HEK293 (cell line): ENCODE measurements at regions of chr17 and their contacts with region 1.

Region 1: DNA sequence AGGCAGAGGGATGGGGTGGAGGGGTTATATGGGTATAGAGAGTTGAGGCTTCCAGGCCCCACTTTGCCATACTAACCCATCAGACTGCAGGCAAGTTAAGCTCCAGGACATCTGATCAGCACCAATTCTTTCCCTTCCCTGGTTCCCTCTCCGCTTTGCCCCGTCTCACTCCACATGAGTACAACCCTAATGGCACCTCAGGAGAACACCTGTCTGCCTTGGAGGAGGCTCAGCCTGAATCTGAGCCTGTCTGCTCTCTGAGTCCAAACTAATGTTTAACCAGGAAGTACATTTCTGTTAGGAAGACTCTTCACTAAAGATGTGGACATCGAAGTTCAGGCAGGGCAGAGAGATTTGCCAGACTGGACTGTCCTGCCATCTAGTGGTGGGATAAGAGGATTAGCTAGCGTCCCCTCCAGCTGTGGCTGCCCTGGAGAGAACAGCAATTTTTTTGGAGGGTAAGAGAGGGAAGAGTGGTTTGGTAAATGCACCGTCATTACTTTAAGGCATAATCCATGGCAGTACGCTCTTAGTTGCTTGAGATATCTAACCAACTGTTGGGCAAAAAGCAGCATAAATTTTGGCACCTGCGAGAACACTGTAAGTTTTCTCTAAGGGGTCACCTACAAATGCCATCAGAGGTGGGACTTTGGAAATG is 29.2 kb upstream of the LRRC75A start:
- H3K4me3 ChIP-seq: no peak overlapping the region
- H3K27ac ChIP-seq: no peak overlapping the region
- H3K4me1 ChIP-seq: peaks cover 3% of the 10 kb centered on the region; the same call in 1 of the 2 replicates
- CTCF ChIP-seq: peak; percentile 80

Region 2: DNA sequence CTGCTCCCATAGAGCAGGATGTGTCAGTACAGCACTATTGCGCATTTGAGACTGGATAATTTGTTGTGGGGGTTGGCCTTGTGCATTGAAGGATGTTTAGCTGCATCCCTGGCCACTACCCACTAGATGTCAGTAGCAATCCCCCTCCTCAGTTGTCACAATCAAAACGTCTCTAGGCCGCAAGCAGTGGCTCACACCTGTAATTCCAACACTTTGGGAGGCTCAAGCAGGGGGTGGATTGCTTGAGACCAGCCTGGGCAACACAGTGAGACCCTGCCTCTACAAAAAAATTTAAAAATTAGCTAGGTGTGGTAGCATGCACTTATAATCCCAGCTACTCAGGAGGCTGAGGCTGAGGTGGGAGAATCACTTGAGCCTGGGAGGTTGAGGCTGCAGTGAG is 216.4 kb before region 1 on chr17:
- CTCF ChIA-PET with region 1: interaction called, 12 read pairs
- POLR2A ChIA-PET with region 1: no interaction called
- H3K4me3 ChIP-seq: no peak overlapping the region
- H3K27ac ChIP-seq: no peak overlapping the region
- H3K4me1 ChIP-seq: no peaks in the 10 kb centered on the region
- CTCF ChIP-seq: peak; percentile 73

Region 3: GRCh38 chr17:16428098-16428882 is 92.9 kb before region 1 on chr17:
- CTCF ChIA-PET with region 1: interaction called, 10 read pairs
- POLR2A ChIA-PET with region 1: no interaction called
- H3K4me3 ChIP-seq: no peak overlapping the region
- H3K27ac ChIP-seq: no peak overlapping the region
- H3K4me1 ChIP-seq: no peaks in the 10 kb centered on the region
- CTCF ChIP-seq: peak; percentile 84

Region 4: DNA sequence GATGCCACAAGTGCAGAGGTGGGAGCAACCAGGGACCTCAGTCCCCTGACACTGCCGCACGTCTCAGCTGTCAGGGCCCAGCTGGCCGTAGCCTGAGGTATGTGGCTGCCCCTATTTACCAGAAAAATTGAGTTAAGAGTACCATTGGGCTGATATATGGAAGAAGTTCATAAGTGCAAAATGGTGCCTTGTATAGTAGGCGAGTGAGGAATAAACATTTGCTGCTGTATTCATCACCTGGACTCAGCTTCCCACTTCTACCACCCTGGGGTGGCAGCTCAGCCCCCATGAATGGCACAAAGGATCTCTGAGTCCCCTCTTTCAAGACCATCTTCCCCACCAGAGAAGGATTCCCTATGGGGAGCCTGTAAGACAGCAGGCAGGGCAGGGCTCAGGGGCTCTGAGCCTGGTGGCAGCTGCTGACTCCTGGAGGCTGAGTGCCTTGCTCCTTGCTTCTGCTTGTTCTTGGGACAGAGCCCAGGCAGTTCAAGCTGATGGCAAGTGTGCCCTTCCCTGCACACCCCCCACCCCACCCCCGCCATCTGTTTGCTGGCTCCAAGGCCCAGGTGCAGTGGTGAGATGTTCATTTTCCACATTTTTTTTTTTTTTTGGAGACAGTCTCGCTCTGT is 76.8 kb before region 1 on chr17:
- CTCF ChIA-PET with region 1: interaction called, 16 read pairs
- POLR2A ChIA-PET with region 1: interaction called, 11 read pairs
- H3K4me3 ChIP-seq: no peak overlapping the region
- H3K27ac ChIP-seq: no peak overlapping the region; the same call in 1 of the 2 replicates
- H3K4me1 ChIP-seq: no peaks in the 10 kb centered on the region
- CTCF ChIP-seq: no peak

Region 5: GRCh38 chr17:16463358-16464302 is 57.6 kb before region 1 on chr17:
- CTCF ChIA-PET with region 1: interaction called, 60 read pairs
- POLR2A ChIA-PET with region 1: no interaction called
- H3K4me3 ChIP-seq: no peak overlapping the region
- H3K27ac ChIP-seq: no peak overlapping the region
- H3K4me1 ChIP-seq: no peaks in the 10 kb centered on the region
- CTCF ChIP-seq: no peak

Region 6: GRCh38 chr17:16470265-16470664 is 50.9 kb before region 1 on chr17:
- CTCF ChIA-PET with region 1: interaction called, 60 read pairs
- POLR2A ChIA-PET with region 1: no interaction called
- H3K4me3 ChIP-seq: no peak overlapping the region
- H3K27ac ChIP-seq: no peak overlapping the region
- H3K4me1 ChIP-seq: no peaks in the 10 kb centered on the region
- CTCF ChIP-seq: no peak

Region 7: GRCh38 chr17:16537130-16537458 is 15.9 kb after region 1 on chr17:
- CTCF ChIA-PET with region 1: interaction called, 22 read pairs
- POLR2A ChIA-PET with region 1: interaction called, 6 read pairs
- H3K4me3 ChIP-seq: no peak overlapping the region
- H3K27ac ChIP-seq: no peak overlapping the region
- H3K4me1 ChIP-seq: peaks cover 4% of the 10 kb centered on the region
- CTCF ChIP-seq: no peak